Activated CD4-positive, alpha-beta T cell treated with anti-CD3 and anti-CD28 coated beads for 36 hours (primary cell): ENCODE measurements at regions of chr3 and their contacts with region 1.

Region 1: GRCh38 chr3:192467230-192468140 is 259.9 kb downstream of the FGF12 start:
- DNase-seq: peak; percentile 66
- ATAC-seq: peak; percentile 79
- H3K4me3 Mint-ChIP-seq: no peak overlapping the region
- H3K27ac Mint-ChIP-seq: no peak overlapping the region
- H3K4me1 Mint-ChIP-seq: no peaks in the 10 kb centered on the region
- H3K27me3 Mint-ChIP-seq: peaks cover 27% of the 10 kb centered on the region

Region 2: DNA sequence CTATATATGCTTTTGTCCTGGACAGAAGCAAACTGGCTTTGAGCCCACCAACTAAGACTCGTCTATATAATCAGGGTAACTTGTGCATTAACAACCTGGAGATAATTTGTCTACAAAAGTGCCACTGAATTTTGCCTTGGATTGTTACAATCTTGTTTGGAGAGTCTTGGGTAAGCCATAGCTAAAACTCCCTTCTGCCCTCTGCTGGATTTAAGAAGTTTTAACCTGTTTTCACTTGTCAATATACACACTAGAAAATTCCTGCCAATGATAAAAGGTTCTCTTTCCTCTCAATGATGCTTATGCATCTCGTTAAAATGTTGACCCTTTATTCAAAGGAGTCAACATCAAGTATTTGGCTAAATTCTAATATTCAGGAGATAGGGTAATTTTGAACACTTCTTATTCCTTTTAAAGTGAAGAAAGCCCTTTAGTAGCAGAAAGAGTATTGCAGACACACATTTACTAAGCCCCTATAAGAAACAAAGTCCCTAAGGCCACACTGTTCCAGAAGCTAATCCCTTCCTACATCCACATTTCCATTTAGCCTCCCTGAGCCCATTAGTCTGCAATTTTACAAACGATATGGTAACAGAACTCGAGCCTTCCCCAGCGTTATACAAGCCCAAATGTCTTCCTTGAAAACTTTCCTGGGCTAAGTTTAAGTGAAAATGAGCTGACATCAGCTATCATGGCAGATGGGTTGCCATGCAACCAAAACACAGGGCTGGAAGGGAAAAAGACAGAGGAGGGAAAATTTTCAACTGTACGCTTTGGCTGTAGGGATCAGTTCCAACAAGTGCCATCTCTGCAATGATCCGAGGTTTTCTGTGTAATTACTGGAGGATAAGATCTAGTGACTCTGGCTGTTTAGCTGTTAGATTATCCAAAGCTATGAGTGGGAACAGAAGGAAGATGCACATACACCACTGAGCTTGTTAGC is 335.7 kb after region 1 on chr3:
- CTCF ChIA-PET with region 1: interaction called, 3 read pairs
- POLR2A ChIA-PET with region 1: no interaction called
- intact Hi-C with region 1: loop called (anchors 1 kb)
- DNase-seq: no peak
- ATAC-seq: peak; percentile 36
- H3K4me3 Mint-ChIP-seq: no peak overlapping the region
- H3K27ac Mint-ChIP-seq: no peak overlapping the region
- H3K4me1 Mint-ChIP-seq: no peaks in the 10 kb centered on the region
- H3K27me3 Mint-ChIP-seq: peaks cover 2% of the 10 kb centered on the region